ENCODE measurements at regions of chr11 and their contacts with region 1.

Region 1: GRCh38 chr11:61384271-61385242 is 7.8 kb upstream of the TMEM216 start:
- DNase-seq: no peak
- H3K4me3 ChIP-seq: no peak overlapping the region
- H3K27ac ChIP-seq: no peak overlapping the region
- H3K4me1 ChIP-seq: peaks cover 4% of the 10 kb centered on the region
- H3K27me3 ChIP-seq: no peaks in the 10 kb centered on the region
- CTCF ChIP-seq: no peak

Region 2: DNA sequence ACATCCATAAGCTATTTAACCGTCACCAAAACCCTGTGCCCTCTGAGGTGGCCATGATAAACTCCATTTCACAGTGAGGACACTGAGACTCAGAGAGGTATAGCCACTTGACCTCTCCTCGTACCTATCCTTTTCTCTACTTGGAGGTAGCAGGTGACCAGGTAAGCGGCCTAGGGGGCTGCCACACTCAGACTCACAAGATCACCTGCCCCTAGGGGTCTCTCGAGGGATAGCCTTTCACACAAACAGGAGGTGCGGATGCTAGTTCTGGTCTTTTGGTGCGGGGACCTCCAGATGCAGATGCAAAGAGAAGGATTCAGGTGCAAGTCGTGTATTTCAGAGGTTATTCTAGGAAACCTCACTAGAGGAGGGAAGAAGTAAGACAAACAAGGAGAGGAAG is 645.4 kb before region 1 on chr11:
- CTCF ChIA-PET with region 1: no interaction called
- POLR2A ChIA-PET with region 1: no interaction called
- intact Hi-C with region 1: no loop called
- DNase-seq: peak in 1 of 2 experiments; percentile 20
- H3K4me3 ChIP-seq: no peak overlapping the region
- H3K27ac ChIP-seq: no peak overlapping the region
- H3K4me1 ChIP-seq: no peaks in the 10 kb centered on the region
- H3K27me3 ChIP-seq: peaks cover 58% of the 10 kb centered on the region
- CTCF ChIP-seq: no peak; the same call in 1 of the 2 replicates

Region 3: DNA sequence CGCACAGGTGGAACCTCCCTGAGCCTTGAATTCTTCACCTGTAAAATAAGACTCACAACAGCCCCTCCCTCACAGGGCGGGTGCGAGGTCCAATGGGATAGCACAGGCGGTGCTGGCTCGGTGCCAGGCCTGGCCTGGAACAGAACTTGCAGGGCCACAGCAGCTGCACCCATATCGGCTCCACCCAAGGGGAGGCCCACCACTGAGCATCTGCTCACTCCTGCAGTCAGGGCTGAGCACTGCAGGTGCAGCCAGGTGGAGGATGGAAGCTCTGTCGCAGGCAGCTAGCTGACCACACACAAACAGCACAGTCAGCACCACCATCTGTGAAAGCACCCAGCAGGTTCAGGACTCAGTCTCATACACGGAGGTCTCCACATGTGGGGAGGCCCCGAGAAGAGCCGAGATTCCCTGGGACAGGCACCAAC is 242.9 kb before region 1 on chr11:
- CTCF ChIA-PET with region 1: no interaction called
- POLR2A ChIA-PET with region 1: no interaction called
- intact Hi-C with region 1: no loop called
- DNase-seq: peak in 1 of 2 experiments; percentile 62
- H3K4me3 ChIP-seq: no peak overlapping the region
- H3K27ac ChIP-seq: no peak overlapping the region
- H3K4me1 ChIP-seq: no peaks in the 10 kb centered on the region
- H3K27me3 ChIP-seq: no peaks in the 10 kb centered on the region
- CTCF ChIP-seq: no peak

Region 4: GRCh38 chr11:61254403-61255025 is 130.0 kb before region 1 on chr11:
- CTCF ChIA-PET with region 1: no interaction called
- POLR2A ChIA-PET with region 1: no interaction called
- intact Hi-C with region 1: loop called (anchors 1 kb)
- DNase-seq: peak in 1 of 2 experiments; percentile 65
- H3K4me3 ChIP-seq: no peak overlapping the region
- H3K27ac ChIP-seq: no peak overlapping the region
- H3K4me1 ChIP-seq: no peaks in the 10 kb centered on the region
- H3K27me3 ChIP-seq: peaks cover 81% of the 10 kb centered on the region
- CTCF ChIP-seq: peak; percentile 84

Region 5: DNA sequence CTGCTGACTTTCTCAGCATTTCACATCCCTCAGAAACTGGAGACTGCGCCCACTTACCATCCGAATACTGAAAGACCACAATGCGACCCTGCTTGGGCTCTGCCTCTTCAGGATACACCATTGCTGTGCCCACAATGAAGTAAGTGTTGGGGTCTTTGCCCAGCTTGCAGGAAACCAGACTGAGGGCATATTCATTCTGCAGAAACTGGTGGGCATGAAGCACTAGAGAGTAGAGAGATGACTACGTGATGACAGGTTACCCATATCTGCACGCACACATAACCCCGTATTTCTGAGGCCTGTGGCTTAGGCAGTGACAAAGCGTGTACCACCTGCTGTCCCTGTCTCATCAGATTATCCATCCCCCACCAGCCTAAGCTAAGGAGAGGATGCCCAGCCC is 74.8 kb before region 1 on chr11:
- CTCF ChIA-PET with region 1: no interaction called
- POLR2A ChIA-PET with region 1: no interaction called
- intact Hi-C with region 1: no loop called
- DNase-seq: no peak
- H3K4me3 ChIP-seq: no peak overlapping the region
- H3K27ac ChIP-seq: no peak overlapping the region
- H3K4me1 ChIP-seq: no peaks in the 10 kb centered on the region
- H3K27me3 ChIP-seq: no peaks in the 10 kb centered on the region
- CTCF ChIP-seq: no peak

Region 6: DNA sequence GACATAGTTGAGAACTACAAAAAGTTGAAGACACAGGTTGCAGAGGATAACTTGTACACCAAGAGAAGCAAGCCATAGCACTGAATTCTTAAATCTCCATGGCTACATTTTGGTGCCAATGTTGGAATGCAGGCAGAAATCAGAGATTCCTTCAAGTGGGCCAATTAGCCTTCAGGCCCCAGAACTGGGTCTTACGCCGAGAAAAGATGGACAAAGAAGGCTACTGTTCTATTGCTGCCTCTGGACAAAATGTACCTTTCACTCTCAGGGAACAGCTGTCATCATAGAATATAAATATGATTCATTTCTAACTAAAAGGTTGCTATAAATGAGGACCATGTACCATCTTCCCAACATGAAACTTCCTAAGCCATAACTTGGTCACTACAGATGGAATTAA is 21.5 kb after region 1 on chr11:
- CTCF ChIA-PET with region 1: no interaction called
- POLR2A ChIA-PET with region 1: no interaction called
- intact Hi-C with region 1: no loop called
- DNase-seq: no peak
- H3K4me3 ChIP-seq: no peak overlapping the region
- H3K27ac ChIP-seq: no peak overlapping the region
- H3K4me1 ChIP-seq: no peaks in the 10 kb centered on the region
- H3K27me3 ChIP-seq: no peaks in the 10 kb centered on the region
- CTCF ChIP-seq: no peak